Heart right ventricle (tissue), 16 donors: ENCODE measurements at regions of chr7 and their contacts with region 1.

Region 1: GRCh38 chr7:95690367-95690947 is 81.9 kb upstream of the DYNC1I1 start:
- DNase-seq: peak in 1 of 2 donors; percentile 16
- ATAC-seq: peak; percentile 36 to 82 (median 61)
- H3K4me3 ChIP-seq: peak overlapping the region in 2 of 10 donors; percentile 3 to 33
- H3K27ac ChIP-seq: no peak overlapping the region
- H3K4me1 ChIP-seq: peaks cover 0 to 8% (median 0%) of the 10 kb centered on the region in 9 donors
- H3K27me3 ChIP-seq: no peaks in the 10 kb centered on the region
- CTCF ChIP-seq: peak; percentile 35 to 77 (median 60)

Region 2: DNA sequence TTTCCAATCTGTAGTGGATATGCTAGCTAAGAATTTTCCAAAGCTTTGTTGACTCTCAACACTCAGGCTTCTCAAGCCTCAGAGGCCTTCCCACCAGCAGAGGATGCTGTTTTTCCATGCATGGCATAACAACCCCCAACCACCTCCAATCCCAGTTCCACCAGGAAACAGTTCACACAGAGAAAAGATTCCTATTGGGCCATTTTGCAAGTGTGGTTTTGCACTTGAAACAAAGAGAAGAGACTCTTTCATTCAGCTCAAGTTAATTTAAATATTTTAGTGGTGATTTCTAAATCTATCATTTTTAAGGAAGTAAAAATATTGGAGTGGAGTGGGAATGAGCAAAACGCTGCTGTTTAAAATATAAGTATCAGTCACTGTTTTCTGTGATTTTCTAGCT is 1401.4 kb before region 1 on chr7:
- intact Hi-C with region 1: loop called in 1 of 10 experiments (anchors 10 kb)
- DNase-seq: peak in 1 of 2 donors; percentile 67
- ATAC-seq: peak in 7 of 8 donors; percentile 80 to 92 (median 87)
- H3K4me3 ChIP-seq: no peak overlapping the region
- H3K27ac ChIP-seq: no peak overlapping the region
- H3K4me1 ChIP-seq: no peaks in the 10 kb centered on the region
- H3K27me3 ChIP-seq: peaks cover 0 to 10% (median 0%) of the 10 kb centered on the region in 7 donors
- CTCF ChIP-seq: peak; percentile 32 to 93 (median 77)

Region 3: DNA sequence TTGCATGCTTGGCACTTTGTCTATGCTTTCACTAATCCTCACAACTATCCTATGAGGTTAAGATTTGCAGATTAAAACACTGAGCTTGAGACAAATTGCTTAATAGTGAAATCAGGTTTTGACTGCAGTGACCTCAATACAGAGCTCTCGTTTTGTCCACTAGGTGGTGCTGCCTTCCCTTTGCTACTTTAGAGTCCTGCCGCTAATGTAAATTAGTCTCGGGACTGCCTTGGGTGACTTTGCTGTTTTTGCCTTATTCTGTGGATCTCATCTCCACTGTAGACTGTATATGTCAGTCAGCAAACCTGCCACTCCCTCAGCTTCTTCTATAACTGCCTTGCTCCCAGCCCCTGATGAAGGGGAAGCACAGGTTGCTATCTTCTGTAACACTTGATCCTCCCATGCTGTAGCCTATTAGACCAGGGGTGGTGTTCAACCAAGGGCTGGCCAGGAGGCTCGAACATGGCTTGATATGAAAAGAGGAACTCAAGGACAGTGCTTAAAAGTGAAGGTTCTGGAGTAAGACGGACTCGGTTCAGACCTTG is 178.7 kb before region 1 on chr7:
- intact Hi-C with region 1: loop called in 9 of 10 experiments (anchors 1 to 5 kb)
- DNase-seq: peak in 1 of 2 donors; percentile 71
- ATAC-seq: peak; percentile 72 to 92 (median 89)
- H3K4me3 ChIP-seq: no peak overlapping the region
- H3K27ac ChIP-seq: no peak overlapping the region
- H3K4me1 ChIP-seq: peaks cover 0 to 4% (median 0%) of the 10 kb centered on the region in 9 donors
- H3K27me3 ChIP-seq: peaks cover 0 to 3% (median 0%) of the 10 kb centered on the region in 7 donors
- CTCF ChIP-seq: peak; percentile 88 to 95 (median 92)

Region 4: GRCh38 chr7:95527033-95527775 is 163.3 kb before region 1 on chr7:
- intact Hi-C with region 1: loop called (anchors 1 to 5 kb)
- DNase-seq: peak in 1 of 2 donors; percentile 65
- ATAC-seq: peak; percentile 80 to 93 (median 86)
- H3K4me3 ChIP-seq: no peak overlapping the region
- H3K27ac ChIP-seq: no peak overlapping the region
- H3K4me1 ChIP-seq: peaks cover 0 to 17% (median 12%) of the 10 kb centered on the region in 9 donors
- H3K27me3 ChIP-seq: no peaks in the 10 kb centered on the region
- CTCF ChIP-seq: peak; percentile 82 to 96 (median 90)

Region 5: GRCh38 chr7:95596198-95597063 is 94.0 kb before region 1 on chr7 and contains the start of gene PDK4:
- intact Hi-C with region 1: loop called in 2 of 10 experiments (anchors 10 kb)
- DNase-seq: peak; percentile 93 to 95
- ATAC-seq: peak; percentile 87 to 98 (median 96)
- H3K4me3 ChIP-seq: peak within 1 kb of the TSS; percentile 47 to 91 (median 80)
- H3K27ac ChIP-seq: peak within 1 kb of the TSS; percentile 89 to 99 (median 94)
- H3K4me1 ChIP-seq: peaks cover 0 to 70% (median 51%) of the 10 kb centered on the region in 9 donors
- H3K27me3 ChIP-seq: no peaks in the 10 kb centered on the region
- CTCF ChIP-seq: no peak
- total RNA-seq, gene PDK4: 63.0 to 2,183 (median 269) TPM

Region 6: DNA sequence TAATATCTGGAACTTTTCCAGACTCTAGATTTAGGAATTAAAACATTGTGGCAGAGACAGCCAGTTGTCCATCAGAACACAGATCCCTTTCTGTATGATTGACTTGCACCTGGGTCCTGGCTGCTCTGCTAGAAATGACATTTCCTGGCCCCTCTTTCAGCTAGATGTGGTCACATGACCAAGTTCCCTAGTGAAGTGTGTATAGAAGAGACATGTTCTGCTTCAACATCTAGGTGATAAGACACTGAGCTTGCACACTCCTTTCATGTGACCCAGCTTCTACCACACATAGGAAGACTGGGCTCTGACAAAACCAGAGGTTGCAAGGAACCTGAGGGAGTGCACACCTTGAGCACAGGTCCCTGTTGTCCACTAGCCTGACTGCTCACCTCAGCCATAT is 59.1 kb after region 1 on chr7:
- intact Hi-C with region 1: no loop called
- DNase-seq: no peak
- ATAC-seq: no peak
- H3K4me3 ChIP-seq: no peak overlapping the region
- H3K27ac ChIP-seq: no peak overlapping the region
- H3K4me1 ChIP-seq: no peaks in the 10 kb centered on the region
- H3K27me3 ChIP-seq: no peaks in the 10 kb centered on the region
- CTCF ChIP-seq: no peak